BJ (cell line): ENCODE measurements at regions of chrX and their contacts with region 1.

Region 1: GRCh38 chrX:41561045-41561444 is 113.9 kb downstream of the NYX start:
- DNase-seq: peak; percentile 32
- H3K4me3 ChIP-seq: no peak overlapping the region
- H3K27me3 ChIP-seq: no peaks in the 10 kb centered on the region
- CTCF ChIP-seq: no peak

Region 2: GRCh38 chrX:41322821-41323603 is 238.0 kb before region 1 on chrX:
- CTCF ChIA-PET with region 1: no interaction called
- POLR2A ChIA-PET with region 1: interaction called, 11 read pairs
- DNase-seq: no peak
- H3K4me3 ChIP-seq: no peak overlapping the region
- H3K27me3 ChIP-seq: no peaks in the 10 kb centered on the region
- CTCF ChIP-seq: no peak

Region 3: GRCh38 chrX:41548411-41548810 is 12.6 kb before region 1 on chrX:
- CTCF ChIA-PET with region 1: no interaction called
- POLR2A ChIA-PET with region 1: no interaction called
- DNase-seq: no peak
- H3K4me3 ChIP-seq: no peak overlapping the region
- H3K27me3 ChIP-seq: no peaks in the 10 kb centered on the region
- CTCF ChIP-seq: no peak